Right ventricle myocardium inferior (tissue), 1 donor: ENCODE measurements at regions of chr1 and their contacts with region 1.

Region 1: GRCh38 chr1:197486946-197487345 is 218.9 kb downstream of the CRB1 start:
- DNase-seq: no peak
- ATAC-seq: no peak

Region 2: GRCh38 chr1:196098000-196098399 is 1388.9 kb before region 1 on chr1:
- intact Hi-C with region 1: no loop called
- DNase-seq: no peak
- ATAC-seq: no peak

Region 3: DNA sequence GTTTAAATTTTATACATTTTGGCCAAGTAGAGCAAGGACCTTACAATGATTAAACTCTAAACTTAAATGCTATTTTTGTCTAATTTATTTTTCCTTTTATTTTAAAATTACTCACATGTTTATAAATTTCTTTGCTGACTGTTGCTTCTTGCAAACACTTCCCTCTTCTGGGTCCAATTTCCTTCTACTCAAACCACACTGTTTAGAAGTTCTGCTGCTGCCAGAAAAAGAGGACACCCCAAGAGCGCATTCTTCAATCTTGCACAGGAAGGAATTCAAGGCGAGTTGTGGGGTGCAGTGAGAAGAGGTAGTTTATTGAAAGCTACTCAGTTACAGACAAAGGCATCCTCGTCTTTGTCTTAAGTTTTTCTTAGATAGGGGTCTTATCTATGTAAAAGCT is 581.3 kb after region 1 on chr1:
- intact Hi-C with region 1: loop called (anchors 5 kb)
- DNase-seq: no peak
- ATAC-seq: no peak